RWPE1 (cell line): ENCODE measurements at regions of chr15 and their contacts with region 1.

Region 1: GRCh38 chr15:91032919-91033803 is 10.8 kb upstream of the VPS33B start:
- DNase-seq: peak; percentile 26
- H3K27ac ChIP-seq: no peak overlapping the region
- CTCF ChIP-seq: peak; percentile 76

Region 2: DNA sequence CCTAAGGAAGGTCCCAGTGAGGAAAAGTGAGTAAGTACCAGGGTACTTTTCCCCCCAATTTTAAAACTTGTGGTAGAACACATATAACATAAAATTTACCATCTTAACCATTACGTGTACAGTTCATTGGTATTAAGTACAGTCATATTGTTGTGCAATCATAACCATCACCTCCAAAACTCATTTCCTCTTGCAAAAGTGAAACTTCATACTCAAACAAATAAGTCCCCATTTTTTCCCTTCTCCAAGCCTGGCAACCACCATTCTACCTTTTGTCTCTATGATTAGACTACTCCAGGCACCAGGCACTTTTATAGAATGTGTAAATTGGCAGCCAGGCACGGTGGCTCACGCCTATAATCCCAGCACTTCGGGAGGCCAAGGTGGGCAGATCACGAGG is 51.0 kb before region 1 on chr15:
- CTCF ChIA-PET with region 1: no interaction called
- POLR2A ChIA-PET with region 1: no interaction called
- DNase-seq: no peak
- H3K27ac ChIP-seq: peak overlapping the region; percentile 24; the same call in 1 of the 2 replicates
- CTCF ChIP-seq: no peak

Region 3: DNA sequence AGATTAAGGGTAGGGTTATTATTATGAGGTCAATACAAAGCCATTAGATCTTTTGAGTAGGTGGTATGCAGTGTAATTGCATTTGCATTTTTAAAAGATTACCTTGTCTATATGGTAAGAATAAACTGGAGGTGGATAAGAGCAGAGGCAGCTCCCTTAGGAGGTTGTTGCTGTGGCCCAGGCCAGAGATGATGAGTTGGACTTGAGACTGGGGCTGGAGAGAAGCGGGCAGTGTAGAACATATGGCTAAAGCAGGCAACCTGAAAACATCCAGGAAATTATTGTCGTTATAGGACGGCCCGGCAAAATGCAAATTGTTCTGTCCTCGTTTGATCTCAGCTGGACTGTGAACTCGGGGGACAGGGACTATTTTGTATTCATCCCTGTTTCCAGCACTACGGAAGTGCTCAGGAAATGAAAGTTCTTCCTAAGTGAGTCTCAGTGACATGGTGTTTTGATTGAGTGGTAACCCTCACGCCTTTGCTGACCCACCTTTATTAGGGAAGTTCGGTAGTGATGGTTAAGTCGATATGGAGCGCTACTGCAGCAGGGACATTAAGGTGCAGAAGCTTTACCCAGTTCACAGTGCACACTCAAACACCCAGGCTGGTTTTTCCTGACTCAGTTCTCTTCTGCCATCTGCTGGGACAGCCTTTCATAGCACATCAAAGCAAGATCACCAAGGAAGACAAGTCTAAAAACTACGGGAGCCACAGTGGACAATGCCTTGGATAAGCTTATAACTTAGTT is 16.4 kb after region 1 on chr15:
- CTCF ChIA-PET with region 1: interaction called, 21 read pairs
- POLR2A ChIA-PET with region 1: no interaction called
- DNase-seq: peak; percentile 58
- H3K27ac ChIP-seq: no peak overlapping the region
- CTCF ChIP-seq: peak; percentile 91

Region 4: GRCh38 chr15:91224755-91225380 is 191.7 kb after region 1 on chr15:
- CTCF ChIA-PET with region 1: no interaction called
- POLR2A ChIA-PET with region 1: no interaction called
- DNase-seq: peak; percentile 48
- H3K27ac ChIP-seq: no peak overlapping the region
- CTCF ChIP-seq: peak; percentile 34